CD8-positive, alpha-beta T cell (primary cell): ENCODE measurements at regions of chr20 and their contacts with region 1.

Region 1: DNA sequence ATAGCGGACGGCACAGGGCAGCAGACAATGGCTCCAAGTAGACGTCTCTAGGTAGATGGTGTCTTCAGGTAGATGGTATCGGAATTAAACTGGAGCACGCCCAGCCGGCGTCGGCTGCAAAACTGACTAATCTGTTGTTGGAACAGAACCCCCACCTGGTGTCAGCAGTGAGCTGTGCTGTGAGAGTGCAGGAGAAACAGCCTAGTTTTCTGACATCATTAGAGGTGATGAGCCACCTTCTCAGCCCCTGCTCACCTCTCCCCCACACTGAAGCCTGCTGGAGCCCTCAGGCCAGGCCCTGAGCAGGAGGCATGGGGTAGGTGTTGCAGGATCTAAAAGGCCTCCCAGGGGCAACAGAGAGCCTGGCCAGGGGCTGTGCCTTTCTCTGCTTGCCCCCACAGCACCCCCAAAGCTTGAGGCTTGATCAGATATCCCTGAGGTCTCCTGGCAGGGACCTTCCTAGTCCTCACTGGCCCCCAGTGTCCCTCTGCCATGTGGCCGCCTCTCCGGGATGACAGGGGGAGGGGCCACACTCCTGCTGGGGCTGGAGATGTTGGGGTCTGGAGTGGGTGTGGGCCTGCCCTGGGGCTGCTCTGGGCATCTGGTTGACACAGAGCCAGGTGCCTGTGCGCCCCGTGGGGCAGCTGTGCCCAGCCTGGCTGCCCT is 6.9 kb upstream of the HELZ2 start:
- DNase-seq: peak; percentile 58 to 84 (median 77)
- ATAC-seq: peak; percentile 99
- H3K4me3 ChIP-seq: no peak overlapping the region
- H3K4me3 Mint-ChIP-seq: no peak overlapping the region
- H3K27ac ChIP-seq: no peak overlapping the region
- H3K27ac Mint-ChIP-seq: no peak overlapping the region
- H3K4me1 ChIP-seq: peaks cover 5% of the 10 kb centered on the region
- H3K4me1 Mint-ChIP-seq: peaks cover 3% of the 10 kb centered on the region
- H3K27me3 ChIP-seq: no peaks in the 10 kb centered on the region
- H3K27me3 Mint-ChIP-seq: no peaks in the 10 kb centered on the region
- CTCF ChIP-seq: peak; percentile 64

Region 2: DNA sequence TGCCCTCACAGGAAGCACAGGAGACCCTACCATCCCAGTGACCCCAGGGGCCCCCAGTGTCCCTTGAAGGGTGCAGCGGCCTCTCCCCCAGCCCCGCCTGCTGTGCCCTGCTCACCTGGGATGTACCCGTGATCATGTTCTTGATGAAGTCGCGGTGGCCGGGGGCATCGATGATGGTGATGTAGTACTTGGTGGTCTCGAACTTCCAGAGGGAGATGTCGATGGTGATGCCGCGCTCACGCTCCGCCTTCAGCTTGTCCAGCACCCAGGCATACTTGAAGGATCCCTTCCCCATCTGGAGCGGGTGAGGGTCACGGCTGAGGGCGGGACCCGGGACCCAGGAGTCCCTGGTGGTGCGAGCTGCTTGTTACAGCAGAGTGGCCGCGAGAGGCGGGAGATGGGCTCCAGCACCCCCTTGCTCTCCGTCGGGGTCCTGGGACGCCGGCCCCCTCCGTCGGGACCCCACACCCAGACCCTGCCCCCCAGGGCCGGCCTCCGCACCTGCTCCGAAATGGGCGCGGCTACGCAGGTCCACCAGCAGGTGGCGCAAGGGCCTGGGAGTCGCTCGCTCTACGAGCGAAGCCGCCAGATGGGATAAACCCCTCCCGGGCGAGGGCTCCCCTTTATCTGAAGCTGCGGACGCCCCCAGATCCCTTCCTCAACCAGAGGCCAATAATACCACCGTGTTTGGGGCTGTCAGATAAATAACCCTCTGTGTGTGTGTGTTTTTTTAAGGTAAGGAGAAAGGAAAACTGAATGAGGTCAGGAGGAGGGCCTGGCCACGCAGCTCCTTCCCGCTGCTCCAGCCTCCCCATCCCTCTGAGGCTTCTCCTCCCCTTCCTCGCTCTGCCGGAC is 85.0 kb before region 1 on chr20:
- CTCF ChIA-PET with region 1: interaction called, 11 read pairs
- POLR2A ChIA-PET with region 1: no interaction called
- intact Hi-C with region 1: loop called in 1 of 2 experiments (anchors 2 kb)
- DNase-seq: peak; percentile 48 to 86 (median 78)
- ATAC-seq: peak; percentile 74
- H3K4me3 ChIP-seq: peak overlapping the region; percentile 15 to 18
- H3K4me3 Mint-ChIP-seq: peak overlapping the region; percentile 39
- H3K27ac ChIP-seq: no peak overlapping the region
- H3K27ac Mint-ChIP-seq: no peak overlapping the region
- H3K4me1 ChIP-seq: peaks cover 16% of the 10 kb centered on the region
- H3K4me1 Mint-ChIP-seq: peaks cover 5% of the 10 kb centered on the region
- H3K27me3 ChIP-seq: peaks cover 9 to 33% of the 10 kb centered on the region in 2 experiments
- H3K27me3 Mint-ChIP-seq: peaks cover 10% of the 10 kb centered on the region
- CTCF ChIP-seq: peak; percentile 95

Region 3: GRCh38 chr20:63544958-63545534 is 35.9 kb before region 1 on chr20:
- CTCF ChIA-PET with region 1: no interaction called
- POLR2A ChIA-PET with region 1: no interaction called
- intact Hi-C with region 1: no loop called
- DNase-seq: no peak
- ATAC-seq: no peak
- H3K4me3 ChIP-seq: no peak overlapping the region
- H3K4me3 Mint-ChIP-seq: no peak overlapping the region
- H3K27ac ChIP-seq: no peak overlapping the region
- H3K27ac Mint-ChIP-seq: no peak overlapping the region
- H3K4me1 ChIP-seq: peaks cover 4% of the 10 kb centered on the region
- H3K4me1 Mint-ChIP-seq: peaks cover 5% of the 10 kb centered on the region
- H3K27me3 ChIP-seq: peaks cover 0 to 2% of the 10 kb centered on the region in 2 experiments
- H3K27me3 Mint-ChIP-seq: peaks cover 6% of the 10 kb centered on the region
- CTCF ChIP-seq: no peak